GM10248 (cell line): ENCODE measurements at regions of chr14 and their contacts with region 1.

Region 1: GRCh38 chr14:105337966-105338741 is 23.6 kb downstream of the PACS2 start:
- DNase-seq: no peak
- CTCF ChIP-seq: no peak

Region 2: GRCh38 chr14:105351920-105352851 is 14.0 kb after region 1 on chr14:
- CTCF ChIA-PET with region 1: interaction called, 31 read pairs
- POLR2A ChIA-PET with region 1: no interaction called
- DNase-seq: peak; percentile 94
- CTCF ChIP-seq: peak; percentile 93

Region 3: GRCh38 chr14:105473677-105474482 is 135.7 kb after region 1 on chr14:
- CTCF ChIA-PET with region 1: no interaction called
- POLR2A ChIA-PET with region 1: no interaction called
- DNase-seq: peak; percentile 66
- CTCF ChIP-seq: no peak